WTC11 (cell line): ENCODE measurements at regions of chr18 and their contacts with region 1.

Region 1: GRCh38 chr18:12271376-12272235 is 17.4 kb downstream of the CIDEA start:
- DNase-seq: peak; percentile 77
- ATAC-seq: peak; percentile 93
- H3K4me3 Mint-ChIP-seq: peak overlapping the region; percentile 65
- H3K27ac Mint-ChIP-seq: peak overlapping the region; percentile 36; the same call in 1 of the 2 replicates
- H3K4me1 Mint-ChIP-seq: peaks cover 5% of the 10 kb centered on the region; the same call in 1 of the 2 replicates
- H3K27me3 Mint-ChIP-seq: no peaks in the 10 kb centered on the region
- CTCF ChIP-seq: peak; percentile 68

Region 2: GRCh38 chr18:12236934-12237832 is 34.4 kb before region 1 on chr18:
- CTCF ChIA-PET with region 1: interaction called, 24 read pairs
- POLR2A ChIA-PET with region 1: no interaction called
- DNase-seq: peak; percentile 89
- ATAC-seq: peak; percentile 98
- H3K4me3 Mint-ChIP-seq: no peak overlapping the region
- H3K27ac Mint-ChIP-seq: no peak overlapping the region
- H3K4me1 Mint-ChIP-seq: no peaks in the 10 kb centered on the region
- H3K27me3 Mint-ChIP-seq: peaks cover 6% of the 10 kb centered on the region
- CTCF ChIP-seq: peak; percentile 93

Region 3: GRCh38 chr18:12254136-12254829 is 17.3 kb before region 1 on chr18 and contains the start of gene CIDEA:
- CTCF ChIA-PET with region 1: interaction called, 50 read pairs
- POLR2A ChIA-PET with region 1: interaction called, 5 read pairs
- DNase-seq: peak; percentile 66
- ATAC-seq: peak; percentile 75
- H3K4me3 Mint-ChIP-seq: peak within 1 kb of the TSS; percentile 73
- H3K27ac Mint-ChIP-seq: no peak within 1 kb of the TSS
- H3K4me1 Mint-ChIP-seq: peaks cover 24% of the 10 kb centered on the region
- H3K27me3 Mint-ChIP-seq: peaks cover 70% of the 10 kb centered on the region
- CTCF ChIP-seq: no peak
- total RNA-seq, gene CIDEA: 0.23 to 0.50 TPM (median 0.23 TPM) in 3 replicates

Region 4: DNA sequence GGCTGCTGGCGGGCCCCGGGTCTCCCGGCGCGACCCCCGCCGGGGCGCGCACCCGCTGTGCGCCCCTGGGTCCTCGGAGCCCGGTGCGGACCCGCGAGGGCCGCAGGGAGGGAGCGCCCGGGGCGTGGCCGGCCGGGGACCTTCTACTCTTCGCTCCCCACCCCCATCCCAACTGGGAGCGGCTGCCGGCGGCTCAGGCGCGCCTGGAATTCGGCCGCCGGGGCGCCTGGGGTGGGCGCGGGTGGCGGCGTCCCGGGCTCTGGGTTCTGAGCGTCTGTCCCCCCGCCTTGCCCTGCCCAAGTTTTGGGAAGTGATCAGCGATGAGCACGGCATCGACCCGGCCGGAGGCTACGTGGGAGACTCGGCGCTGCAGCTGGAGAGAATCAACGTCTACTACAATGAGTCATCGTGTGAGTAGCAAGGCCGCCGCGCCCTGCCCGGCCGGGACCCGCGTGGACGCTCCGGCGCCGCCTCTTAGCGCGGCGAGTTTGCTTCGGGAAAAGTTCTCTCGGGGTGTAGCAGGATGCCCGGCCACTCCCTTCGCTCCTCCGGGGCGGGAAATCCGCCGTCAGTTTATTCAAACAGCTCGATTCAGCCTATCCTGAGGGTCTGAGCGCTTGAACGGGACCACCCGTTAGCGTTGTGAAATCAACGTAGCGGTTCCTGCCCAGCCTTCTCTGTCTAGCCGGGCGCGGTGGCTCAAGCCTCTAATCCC is 36.9 kb after region 1 on chr18:
- CTCF ChIA-PET with region 1: interaction called, 24 read pairs
- POLR2A ChIA-PET with region 1: interaction called, 3 read pairs
- DNase-seq: peak; percentile 67
- ATAC-seq: peak; percentile 33
- H3K4me3 Mint-ChIP-seq: peak overlapping the region; percentile 79
- H3K27ac Mint-ChIP-seq: no peak overlapping the region
- H3K4me1 Mint-ChIP-seq: peaks cover 49% of the 10 kb centered on the region
- H3K27me3 Mint-ChIP-seq: peaks cover 20% of the 10 kb centered on the region
- CTCF ChIP-seq: no peak

Region 5: DNA sequence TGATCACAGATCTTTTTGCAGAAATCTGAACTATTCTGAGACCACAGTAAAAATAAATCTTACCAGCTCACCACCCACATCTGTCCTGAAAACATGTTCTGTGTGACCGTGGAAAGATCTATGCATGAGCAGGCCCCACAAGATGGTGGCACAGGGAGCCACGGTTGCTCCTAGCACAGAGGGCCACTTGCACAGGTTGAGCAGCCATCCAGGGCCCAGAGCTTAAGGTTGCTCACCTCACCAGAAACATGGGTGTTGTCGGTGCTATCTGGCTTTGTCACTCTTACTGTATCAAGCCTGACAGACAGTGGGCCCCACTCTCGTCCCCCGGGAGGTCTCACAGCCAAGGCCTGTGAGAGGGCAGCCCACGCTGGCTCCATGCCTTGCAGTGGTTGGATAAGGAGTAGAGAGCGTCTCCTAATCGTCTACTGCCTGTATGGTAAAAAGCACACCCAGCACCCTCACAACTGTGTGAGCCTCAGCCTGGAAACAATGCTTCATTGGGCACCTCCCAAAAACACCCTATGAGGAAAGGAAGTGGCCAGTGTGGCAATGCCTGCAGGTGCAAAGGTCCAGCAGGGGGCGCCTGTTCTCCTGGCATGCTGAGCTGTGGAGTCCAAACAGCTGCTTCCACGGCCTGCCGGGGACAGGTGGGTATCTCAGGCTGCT is 56.0 kb after region 1 on chr18:
- CTCF ChIA-PET with region 1: interaction called, 37 read pairs
- POLR2A ChIA-PET with region 1: no interaction called
- DNase-seq: peak; percentile 94
- ATAC-seq: peak; percentile 93
- H3K4me3 Mint-ChIP-seq: no peak overlapping the region
- H3K27ac Mint-ChIP-seq: peak overlapping the region; percentile 80
- H3K4me1 Mint-ChIP-seq: peaks cover 15% of the 10 kb centered on the region
- H3K27me3 Mint-ChIP-seq: no peaks in the 10 kb centered on the region
- CTCF ChIP-seq: peak; percentile 86

Region 6: DNA sequence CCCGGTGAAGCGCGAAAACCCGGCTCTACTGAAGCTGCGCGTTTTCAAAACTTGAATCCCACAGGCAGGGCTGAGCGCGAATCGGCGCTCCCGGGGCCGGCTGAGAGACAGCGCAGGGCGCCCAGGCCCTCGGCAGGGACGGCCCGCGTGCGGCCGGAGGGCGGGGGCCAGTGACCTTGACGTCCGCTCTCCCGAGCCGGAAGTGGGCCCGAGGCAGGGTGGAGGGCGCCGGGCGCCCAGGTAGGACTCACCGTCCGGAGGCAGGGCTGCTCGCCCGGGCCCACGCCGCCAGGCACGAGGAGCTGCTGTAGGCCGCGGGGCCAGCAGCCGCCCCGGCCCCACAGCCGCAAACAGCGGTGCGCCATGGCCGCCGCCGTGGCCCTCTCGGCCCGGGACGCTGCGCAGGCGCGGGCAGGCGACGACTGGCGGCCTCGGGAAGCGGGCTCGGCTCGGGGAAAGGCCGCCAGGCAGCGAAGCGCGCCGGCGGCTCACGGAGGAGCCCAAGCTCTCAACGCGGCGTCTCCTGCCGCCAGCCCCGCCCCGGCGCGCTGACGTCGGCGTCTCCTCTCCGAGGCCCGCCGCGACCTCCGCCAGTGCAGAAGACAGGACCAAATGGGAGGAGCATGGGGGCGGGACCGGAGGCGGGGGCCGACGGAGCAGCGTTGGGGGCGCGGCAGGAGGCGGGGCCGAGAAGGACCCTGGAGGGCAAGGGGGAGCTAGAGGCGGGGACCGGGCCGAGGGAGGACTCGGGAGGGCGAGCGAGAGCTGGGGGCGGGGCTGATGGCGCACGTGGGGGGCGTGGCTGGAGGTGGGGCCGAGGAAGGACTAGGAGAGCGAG is 105.3 kb after region 1 on chr18 and contains the start of gene AFG3L2:
- CTCF ChIA-PET with region 1: interaction called, 12 read pairs
- POLR2A ChIA-PET with region 1: interaction called, 4 read pairs
- DNase-seq: peak; percentile 100
- ATAC-seq: peak; percentile 83
- H3K4me3 Mint-ChIP-seq: peak within 1 kb of the TSS; percentile 91
- H3K27ac Mint-ChIP-seq: peak within 1 kb of the TSS; percentile 100
- H3K4me1 Mint-ChIP-seq: peaks cover 41% of the 10 kb centered on the region
- H3K27me3 Mint-ChIP-seq: no peaks in the 10 kb centered on the region
- CTCF ChIP-seq: no peak
- total RNA-seq, gene AFG3L2: 73.9 to 109 TPM (median 76.0 TPM) in 3 replicates